Vagina (tissue), 2 donors: ENCODE measurements at regions of chr22 and their contacts with region 1.

Region 1: DNA sequence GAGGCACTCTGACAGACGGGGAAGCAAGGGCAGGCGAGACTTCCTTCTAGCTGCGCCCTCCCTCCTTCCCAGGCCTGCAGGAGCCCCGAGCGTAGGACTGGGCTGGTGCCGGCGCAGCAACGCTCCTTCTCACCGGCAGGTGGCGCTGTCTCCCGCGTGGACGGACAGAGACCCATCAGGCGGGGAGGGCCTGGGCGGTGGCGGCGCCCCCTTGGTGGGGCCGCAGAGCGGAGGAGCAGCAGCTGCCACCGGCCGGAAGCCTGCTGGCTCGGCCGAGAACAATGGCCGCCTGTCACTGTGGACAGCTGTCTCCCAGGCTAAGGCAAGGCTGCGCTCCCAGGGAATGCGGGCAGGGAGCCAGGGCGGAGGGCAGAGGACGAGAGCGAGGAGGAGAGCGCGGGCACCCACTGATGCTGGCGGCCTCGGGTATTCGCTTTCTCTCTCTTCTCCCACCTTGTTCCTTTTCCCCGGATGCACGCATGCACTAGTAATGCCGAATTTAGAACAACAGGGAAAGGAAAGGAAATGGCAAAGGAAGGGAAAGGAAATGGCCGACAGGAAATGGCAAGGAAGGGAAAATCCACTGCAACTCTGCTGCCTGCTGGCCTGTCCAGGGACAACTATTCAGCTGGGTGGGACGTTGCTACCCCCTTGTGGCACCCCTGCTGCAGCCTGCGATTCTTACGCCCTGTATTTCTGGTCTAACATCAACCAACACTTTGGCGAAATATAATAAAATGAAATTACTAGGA is 14.4 kb downstream of the PPM1F start:
- DNase-seq: peak in 1 of 2 donors; percentile 96
- H3K4me3 ChIP-seq: peak overlapping the region; percentile 50 to 66
- H3K27ac ChIP-seq: peak overlapping the region; percentile 88
- H3K4me1 ChIP-seq: peaks cover 75% of the 10 kb centered on the region
- H3K27me3 ChIP-seq: no peaks in the 10 kb centered on the region
- CTCF ChIP-seq: peak; percentile 95 to 100 (median 98)
- POLR2A ChIP-seq: no peak

Region 2: GRCh38 chr22:21712894-21713712 is 225.1 kb before region 1 on chr22:
- intact Hi-C with region 1: loop called (anchors 5 kb)
- DNase-seq: no peak
- H3K4me3 ChIP-seq: peak overlapping the region in 1 of 2 donors; percentile 4
- H3K27ac ChIP-seq: no peak overlapping the region
- H3K4me1 ChIP-seq: peaks cover 10% of the 10 kb centered on the region
- H3K27me3 ChIP-seq: no peaks in the 10 kb centered on the region
- CTCF ChIP-seq: peak; percentile 72 to 81 (median 74)
- POLR2A ChIP-seq: no peak

Region 3: DNA sequence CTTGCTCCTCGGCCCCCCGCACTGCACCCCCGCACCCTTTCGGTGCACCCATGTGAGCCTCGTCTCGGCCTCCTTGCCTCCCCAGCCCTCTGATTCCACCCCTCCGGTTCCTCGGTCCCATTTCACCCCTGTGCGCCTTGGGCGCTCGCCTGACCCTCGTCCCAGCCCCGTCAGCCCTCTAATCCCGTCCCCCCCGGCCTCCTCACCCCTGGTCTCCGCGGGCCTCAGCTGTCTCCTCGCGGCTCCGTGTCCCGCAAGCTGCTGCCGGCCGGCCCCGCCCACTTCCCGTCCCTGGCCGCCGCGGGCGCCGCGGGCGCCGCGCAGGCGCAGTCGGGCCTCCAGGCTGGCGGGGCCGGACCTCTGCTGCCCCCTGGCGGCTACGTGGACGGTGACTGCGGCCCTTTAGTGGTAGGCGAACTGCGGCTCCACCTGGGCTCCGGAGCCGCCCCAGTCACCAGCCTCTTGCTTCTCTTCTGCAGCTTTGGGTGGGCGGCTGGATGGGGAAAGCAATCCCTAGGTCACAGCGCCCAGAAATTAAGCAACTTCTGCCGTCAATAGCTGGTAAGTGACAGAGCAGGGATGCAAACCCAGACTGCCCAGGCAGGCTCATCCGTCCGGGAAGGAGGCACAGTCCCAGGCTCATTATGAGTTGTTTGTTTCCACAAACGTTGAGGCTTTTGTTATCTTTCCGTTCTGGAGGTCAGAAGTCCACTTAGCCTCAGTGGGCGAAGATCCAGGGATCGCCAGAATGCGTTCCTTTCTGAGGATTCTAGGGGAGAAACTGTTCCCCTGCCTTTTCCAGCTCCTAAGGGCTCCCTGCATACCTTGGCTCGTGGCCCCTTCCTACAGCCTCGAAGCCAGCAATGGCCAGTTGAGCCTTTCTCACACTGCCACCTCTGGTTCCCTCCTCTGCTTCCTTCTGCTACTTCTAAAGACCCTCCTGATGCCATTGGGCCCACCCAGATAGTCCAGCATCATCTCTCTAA is 14.6 kb after region 1 on chr22 and contains the start of gene PPM1F:
- intact Hi-C with region 1: loop called (anchors 2 kb)
- DNase-seq: no peak
- H3K4me3 ChIP-seq: peak within 1 kb of the TSS; percentile 66 to 85
- H3K27ac ChIP-seq: peak within 1 kb of the TSS; percentile 74
- H3K4me1 ChIP-seq: peaks cover 42% of the 10 kb centered on the region
- H3K27me3 ChIP-seq: no peaks in the 10 kb centered on the region
- CTCF ChIP-seq: peak; percentile 83 to 97 (median 96)
- POLR2A ChIP-seq: no peak
- total RNA-seq, gene PPM1F: 35.6 TPM